ENCODE measurements at regions of chr3 and their contacts with region 1.

Region 1: GRCh38 chr3:141714671-141715070 is 23.4 kb upstream of the RNF7 start:
- DNase-seq: no peak
- H3K4me3 ChIP-seq: no peak overlapping the region
- H3K27ac ChIP-seq: no peak overlapping the region
- H3K4me1 ChIP-seq: no peaks in the 10 kb centered on the region
- H3K27me3 ChIP-seq: no peaks in the 10 kb centered on the region
- CTCF ChIP-seq: no peak
- EP300 ChIP-seq: no peak
- POLR2A ChIP-seq: no peak
- RAD21 ChIP-seq: no peak

Region 2: DNA sequence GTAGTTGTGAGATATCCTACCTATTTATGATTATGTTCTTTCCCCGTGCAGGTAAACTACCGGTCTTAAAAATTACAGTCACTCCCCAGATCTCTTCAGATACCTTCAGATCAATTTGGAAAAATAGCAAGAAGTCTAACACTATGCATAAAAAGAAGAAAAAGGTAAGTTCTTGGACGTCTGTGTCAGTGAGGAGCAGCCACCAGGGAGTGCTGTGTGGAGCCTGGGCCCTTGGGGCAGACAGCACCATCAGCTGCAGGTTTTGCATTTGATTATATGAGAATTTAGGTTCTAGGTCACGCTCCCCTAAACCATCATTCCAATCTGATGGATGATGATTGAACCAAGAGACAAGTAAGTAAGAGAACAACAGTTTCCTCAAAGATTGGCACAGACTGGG is 14.6 kb after region 1 on chr3:
- CTCF ChIA-PET with region 1: interaction called, 16 read pairs
- POLR2A ChIA-PET with region 1: no interaction called
- DNase-seq: no peak
- H3K4me3 ChIP-seq: no peak overlapping the region
- H3K27ac ChIP-seq: no peak overlapping the region
- H3K4me1 ChIP-seq: no peaks in the 10 kb centered on the region
- H3K27me3 ChIP-seq: no peaks in the 10 kb centered on the region
- CTCF ChIP-seq: peak; percentile 36 to 50 (median 43)
- EP300 ChIP-seq: no peak
- POLR2A ChIP-seq: no peak
- RAD21 ChIP-seq: peak; percentile 24 to 27; a peak in 2 of 4 replicates

Measured in H1 (cell line).